ENCODE measurements at regions of chrX and their contacts with region 1.

Region 1: GRCh38 chrX:108070891-108071290 is 20.5 kb downstream of the PSMD10 start:
- DNase-seq: no peak
- ATAC-seq: no peak
- H3K4me3 ChIP-seq: no peak overlapping the region
- H3K4me3 Mint-ChIP-seq: no peak overlapping the region
- H3K27ac ChIP-seq: no peak overlapping the region
- H3K27ac Mint-ChIP-seq: peak overlapping the region; percentile 2
- H3K4me1 ChIP-seq: no peaks in the 10 kb centered on the region
- H3K4me1 Mint-ChIP-seq: peaks cover 3% of the 10 kb centered on the region
- H3K27me3 ChIP-seq: no peaks in the 10 kb centered on the region
- H3K27me3 Mint-ChIP-seq: no peaks in the 10 kb centered on the region
- CTCF ChIP-seq: no peak

Region 2: DNA sequence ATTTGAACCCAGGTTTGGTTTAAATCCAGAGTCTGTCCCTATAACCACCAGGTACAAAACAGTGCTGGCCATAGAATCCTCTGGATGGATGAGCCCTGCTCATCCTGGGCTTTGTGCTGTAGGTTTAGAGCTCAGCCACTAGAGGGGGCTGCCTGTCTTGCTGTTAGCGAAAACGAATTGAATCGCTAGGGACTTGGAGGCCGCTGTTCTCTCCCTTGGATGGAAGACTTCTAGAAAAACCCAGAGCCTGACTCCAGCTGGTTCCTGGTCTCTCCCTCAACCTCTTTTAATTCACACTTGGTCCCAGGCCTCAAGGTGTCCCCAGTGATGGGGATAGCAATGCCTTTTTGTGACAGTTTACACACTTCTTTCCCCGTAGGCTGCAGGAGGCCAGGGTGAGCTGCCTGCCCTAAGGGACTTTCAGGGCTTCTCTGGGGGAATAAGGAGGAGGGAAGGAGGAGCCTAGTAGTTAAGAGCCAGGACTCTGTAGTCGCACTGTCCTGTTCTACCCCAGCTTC is 1176.4 kb before region 1 on chrX:
- CTCF ChIA-PET with region 1: no interaction called
- POLR2A ChIA-PET with region 1: no interaction called
- intact Hi-C with region 1: loop called in 1 of 2 experiments (anchors 5 kb)
- DNase-seq: peak in 8 of 9 experiments; percentile 6 to 59 (median 48)
- ATAC-seq: peak; percentile 61
- H3K4me3 ChIP-seq: no peak overlapping the region
- H3K4me3 Mint-ChIP-seq: no peak overlapping the region
- H3K27ac ChIP-seq: no peak overlapping the region
- H3K27ac Mint-ChIP-seq: no peak overlapping the region
- H3K4me1 ChIP-seq: no peaks in the 10 kb centered on the region
- H3K4me1 Mint-ChIP-seq: no peaks in the 10 kb centered on the region
- H3K27me3 ChIP-seq: no peaks in the 10 kb centered on the region
- H3K27me3 Mint-ChIP-seq: peaks cover 4% of the 10 kb centered on the region
- CTCF ChIP-seq: peak; percentile 47

Region 3: DNA sequence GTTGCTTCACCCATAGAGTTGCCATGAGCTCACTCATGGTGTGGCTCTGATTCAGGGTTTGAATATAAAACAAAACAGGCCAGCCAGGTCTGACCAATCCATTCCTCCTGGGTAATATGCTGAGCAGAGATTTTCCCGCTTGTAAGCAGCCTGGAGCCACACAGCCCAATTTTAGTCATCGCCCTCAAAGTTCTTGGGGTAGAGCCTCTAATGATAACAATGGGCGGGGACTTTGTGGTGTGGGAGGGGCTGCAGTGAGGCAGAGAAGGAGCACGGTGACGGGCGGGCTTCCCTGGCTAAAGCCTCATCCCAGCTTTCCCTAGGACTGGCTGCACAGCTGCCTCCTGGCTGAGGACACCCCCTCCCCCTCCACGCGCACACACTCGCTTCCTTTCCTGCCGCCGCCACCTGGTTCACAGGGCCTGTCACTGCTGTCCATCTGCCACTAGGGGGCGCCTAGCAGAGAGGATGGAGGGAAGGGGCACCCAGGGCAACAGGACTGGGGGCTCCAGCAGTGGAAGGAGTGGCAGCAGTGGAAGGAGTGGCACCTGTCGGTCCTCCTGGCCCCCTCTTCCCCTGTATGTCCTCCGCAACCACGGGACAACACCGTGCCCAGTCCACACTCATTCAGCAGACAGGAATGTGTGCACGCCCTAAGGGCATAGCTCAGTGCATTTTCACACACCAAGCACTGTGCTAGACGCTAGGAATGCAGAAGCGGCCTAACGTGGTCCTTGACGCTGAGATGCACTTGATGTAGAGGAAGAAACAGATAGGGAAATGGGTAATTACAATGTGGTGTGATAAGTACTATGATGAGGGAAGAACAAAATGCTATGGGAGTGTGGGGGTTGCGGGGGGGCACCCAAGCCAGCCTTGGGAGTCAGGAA is 415.8 kb before region 1 on chrX:
- CTCF ChIA-PET with region 1: no interaction called
- POLR2A ChIA-PET with region 1: no interaction called
- intact Hi-C with region 1: loop called in 1 of 2 experiments (anchors 2 kb)
- DNase-seq: peak in 8 of 9 experiments; percentile 46 to 81 (median 69)
- ATAC-seq: peak; percentile 87
- H3K4me3 ChIP-seq: no peak overlapping the region
- H3K4me3 Mint-ChIP-seq: no peak overlapping the region
- H3K27ac ChIP-seq: no peak overlapping the region
- H3K27ac Mint-ChIP-seq: peak overlapping the region; percentile 57
- H3K4me1 ChIP-seq: peaks cover 11% of the 10 kb centered on the region
- H3K4me1 Mint-ChIP-seq: peaks cover 18% of the 10 kb centered on the region
- H3K27me3 ChIP-seq: peaks cover 0 to 2% of the 10 kb centered on the region in 2 experiments
- H3K27me3 Mint-ChIP-seq: no peaks in the 10 kb centered on the region
- CTCF ChIP-seq: peak; percentile 55

Region 4: GRCh38 chrX:107905366-107905765 is 165.5 kb before region 1 on chrX:
- CTCF ChIA-PET with region 1: no interaction called
- POLR2A ChIA-PET with region 1: no interaction called
- intact Hi-C with region 1: loop called in 1 of 2 experiments (anchors 5 kb)
- DNase-seq: no peak
- ATAC-seq: no peak
- H3K4me3 ChIP-seq: no peak overlapping the region
- H3K4me3 Mint-ChIP-seq: no peak overlapping the region
- H3K27ac ChIP-seq: no peak overlapping the region
- H3K27ac Mint-ChIP-seq: no peak overlapping the region
- H3K4me1 ChIP-seq: no peaks in the 10 kb centered on the region
- H3K4me1 Mint-ChIP-seq: no peaks in the 10 kb centered on the region
- H3K27me3 ChIP-seq: no peaks in the 10 kb centered on the region
- H3K27me3 Mint-ChIP-seq: no peaks in the 10 kb centered on the region
- CTCF ChIP-seq: no peak

Region 5: GRCh38 chrX:108020631-108021030 is 50.3 kb before region 1 on chrX:
- CTCF ChIA-PET with region 1: interaction called, 17 read pairs
- POLR2A ChIA-PET with region 1: no interaction called
- intact Hi-C with region 1: loop called (anchors 1 to 2 kb)
- DNase-seq: peak in 5 of 9 experiments; percentile 0 to 51 (median 28)
- ATAC-seq: no peak
- H3K4me3 ChIP-seq: peak overlapping the region in 1 of 2 experiments; percentile 17
- H3K4me3 Mint-ChIP-seq: peak overlapping the region; percentile 83
- H3K27ac ChIP-seq: peak overlapping the region; percentile 10 to 19
- H3K27ac Mint-ChIP-seq: peak overlapping the region; percentile 97
- H3K4me1 ChIP-seq: peaks cover 45% of the 10 kb centered on the region
- H3K4me1 Mint-ChIP-seq: peaks cover 70% of the 10 kb centered on the region
- H3K27me3 ChIP-seq: no peaks in the 10 kb centered on the region
- H3K27me3 Mint-ChIP-seq: no peaks in the 10 kb centered on the region
- CTCF ChIP-seq: no peak

Region 6: GRCh38 chrX:108122748-108123147 is 51.9 kb after region 1 on chrX:
- CTCF ChIA-PET with region 1: no interaction called
- POLR2A ChIA-PET with region 1: no interaction called
- intact Hi-C with region 1: no loop called
- DNase-seq: no peak
- ATAC-seq: no peak
- H3K4me3 ChIP-seq: no peak overlapping the region
- H3K4me3 Mint-ChIP-seq: no peak overlapping the region
- H3K27ac ChIP-seq: no peak overlapping the region
- H3K27ac Mint-ChIP-seq: no peak overlapping the region
- H3K4me1 ChIP-seq: no peaks in the 10 kb centered on the region
- H3K4me1 Mint-ChIP-seq: no peaks in the 10 kb centered on the region
- H3K27me3 ChIP-seq: no peaks in the 10 kb centered on the region
- H3K27me3 Mint-ChIP-seq: no peaks in the 10 kb centered on the region
- CTCF ChIP-seq: no peak

Measured in CD8-positive, alpha-beta T cell (primary cell).